ENCODE measurements at regions of chr9 and their contacts with region 1.

Region 1: GRCh38 chr9:109027176-109027575 is 13.9 kb upstream of the CTNNAL1 start:
- DNase-seq: no peak
- ATAC-seq: no peak
- H3K4me3 ChIP-seq: no peak overlapping the region
- H3K27ac ChIP-seq: no peak overlapping the region
- H3K4me1 ChIP-seq: peaks cover 15% of the 10 kb centered on the region
- H3K27me3 ChIP-seq: no peaks in the 10 kb centered on the region
- CTCF ChIP-seq: no peak

Region 2: GRCh38 chr9:108793573-108793972 is 233.6 kb before region 1 on chr9:
- intact Hi-C with region 1: no loop called
- DNase-seq: no peak
- ATAC-seq: no peak
- H3K4me3 ChIP-seq: no peak overlapping the region
- H3K27ac ChIP-seq: no peak overlapping the region
- H3K4me1 ChIP-seq: no peaks in the 10 kb centered on the region
- H3K27me3 ChIP-seq: no peaks in the 10 kb centered on the region
- CTCF ChIP-seq: no peak

Region 3: DNA sequence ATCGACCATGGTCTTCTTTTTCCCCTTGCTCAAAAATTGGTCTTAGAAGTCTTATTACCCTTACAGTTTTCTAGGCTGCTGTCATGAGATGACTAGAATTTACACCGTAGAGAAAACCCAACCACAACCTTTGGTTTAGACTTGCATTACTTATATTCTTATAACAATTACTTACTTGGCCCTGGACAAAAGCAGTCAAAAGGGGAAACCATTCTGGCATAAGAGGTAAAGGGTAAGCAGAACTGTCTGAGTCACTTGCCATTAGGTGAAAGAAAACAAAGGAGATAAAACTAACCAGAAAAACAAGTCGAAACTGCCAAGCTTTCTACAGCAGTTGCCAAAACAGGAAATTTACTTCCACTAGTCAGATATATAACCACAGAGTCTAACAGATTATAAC is 74.6 kb after region 1 on chr9:
- intact Hi-C with region 1: loop called in 1 of 2 experiments (anchors 2 kb)
- DNase-seq: no peak
- ATAC-seq: no peak
- H3K4me3 ChIP-seq: no peak overlapping the region
- H3K27ac ChIP-seq: peak overlapping the region; percentile 76
- H3K4me1 ChIP-seq: peaks cover 57% of the 10 kb centered on the region
- H3K27me3 ChIP-seq: no peaks in the 10 kb centered on the region
- CTCF ChIP-seq: no peak